Common myeloid progenitor, CD34-positive (primary cell): ENCODE measurements at regions of chr5 and their contacts with region 1.

Region 1: GRCh38 chr5:176660860-176661641 is 13.8 kb downstream of the TSPAN17 start:
- DNase-seq: peak; percentile 85 to 90 (median 86)
- H3K4me3 ChIP-seq: no peak overlapping the region
- H3K27ac ChIP-seq: no peak overlapping the region
- H3K4me1 ChIP-seq: peaks cover 4 to 20% (median 14%) of the 10 kb centered on the region in 4 experiments
- H3K27me3 ChIP-seq: peaks cover 0 to 23% (median 15%) of the 10 kb centered on the region in 5 experiments

Region 2: GRCh38 chr5:176647030-176647866 is 13.8 kb before region 1 on chr5 and contains the start of gene TSPAN17:
- CTCF ChIA-PET with region 1: interaction called, 56 read pairs
- POLR2A ChIA-PET with region 1: no interaction called
- DNase-seq: peak; percentile 96 to 97 (median 96)
- H3K4me3 ChIP-seq: peak within 1 kb of the TSS; percentile 47 to 86 (median 78)
- H3K27ac ChIP-seq: peak within 1 kb of the TSS in 1 of 2 experiments; percentile 70
- H3K4me1 ChIP-seq: peaks cover 0 to 32% (median 25%) of the 10 kb centered on the region in 4 experiments
- H3K27me3 ChIP-seq: no peaks in the 10 kb centered on the region

Region 3: DNA sequence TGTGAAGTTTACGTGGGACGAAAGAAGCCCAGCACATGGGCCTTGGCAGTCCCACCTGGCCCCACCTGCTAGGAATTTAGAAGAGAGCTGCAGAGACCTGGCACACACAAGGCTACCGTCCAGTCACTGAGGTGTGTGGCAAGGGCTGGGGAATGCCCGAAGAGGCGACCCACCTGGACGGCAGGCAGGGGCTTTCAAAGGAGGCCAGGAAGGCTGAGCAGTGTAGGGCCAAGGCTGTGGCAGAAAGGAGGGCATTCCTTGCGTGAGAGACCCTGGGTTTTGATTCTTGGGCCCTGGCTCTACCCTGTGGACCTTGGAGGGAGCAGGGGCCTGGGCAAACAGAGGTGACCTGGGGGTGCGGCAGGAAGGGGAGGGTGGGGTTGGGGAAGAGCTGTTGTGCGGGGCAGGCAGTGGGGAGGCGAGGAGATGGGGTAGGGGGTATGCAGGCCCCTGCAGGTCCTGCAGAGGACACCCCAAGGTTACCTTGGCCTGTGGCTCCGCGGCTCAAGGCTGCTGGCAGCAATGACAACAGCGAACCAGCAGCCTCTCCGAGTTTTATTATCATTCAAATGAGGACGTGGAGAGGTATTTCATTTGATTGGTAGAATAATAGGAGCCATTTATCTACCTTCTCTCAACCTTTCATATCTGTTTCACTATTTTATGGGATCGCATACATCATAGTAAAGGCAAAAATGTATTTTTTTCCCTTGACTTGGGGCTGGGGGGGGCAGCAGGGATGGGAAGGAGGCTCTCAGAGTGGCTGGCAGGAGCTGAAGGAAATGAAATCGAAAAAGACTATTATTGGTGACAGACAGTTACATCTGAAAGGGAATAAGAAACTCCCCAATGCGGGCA is 11.1 kb after region 1 on chr5:
- CTCF ChIA-PET with region 1: interaction called, 47 read pairs
- POLR2A ChIA-PET with region 1: no interaction called
- DNase-seq: no peak
- H3K4me3 ChIP-seq: no peak overlapping the region
- H3K27ac ChIP-seq: no peak overlapping the region
- H3K4me1 ChIP-seq: peaks cover 0 to 2% (median 0%) of the 10 kb centered on the region in 4 experiments
- H3K27me3 ChIP-seq: peaks cover 0 to 51% (median 14%) of the 10 kb centered on the region in 5 experiments